Activated naive CD4-positive, alpha-beta T cell treated with anti-CD3 and anti-CD28 coated beads for 36 hours (primary cell): ENCODE measurements at regions of chr3 and their contacts with region 1.

Region 1: DNA sequence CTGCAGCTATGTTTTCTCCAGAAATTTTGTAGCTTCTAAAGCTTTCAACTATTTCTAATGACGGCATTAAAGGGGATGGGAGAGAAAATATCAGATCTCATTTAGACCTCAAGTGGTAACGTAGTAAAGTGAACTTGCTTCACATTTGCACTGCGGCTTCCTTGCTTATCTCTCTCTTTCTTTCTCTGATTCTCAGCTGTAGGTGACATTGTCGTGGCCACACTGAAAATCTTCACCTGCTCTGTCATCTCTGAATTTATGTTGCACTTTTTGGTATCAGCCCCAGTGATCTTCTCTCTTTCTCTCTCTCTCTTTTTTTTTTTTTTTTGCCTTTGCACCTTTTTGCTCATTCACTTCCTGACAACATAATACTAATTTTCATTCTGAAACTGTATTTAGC is 254.1 kb upstream of the SATB1 start:
- DNase-seq: peak; percentile 77
- H3K4me3 Mint-ChIP-seq: peak overlapping the region; percentile 31
- H3K27ac Mint-ChIP-seq: peak overlapping the region; percentile 81
- H3K4me1 Mint-ChIP-seq: peaks cover 81% of the 10 kb centered on the region
- H3K27me3 Mint-ChIP-seq: no peaks in the 10 kb centered on the region

Region 2: GRCh38 chr3:18334837-18335601 is 344.2 kb before region 1 on chr3:
- CTCF ChIA-PET with region 1: no interaction called
- intact Hi-C with region 1: loop called (anchors 1 kb)
- DNase-seq: no peak
- H3K4me3 Mint-ChIP-seq: no peak overlapping the region
- H3K27ac Mint-ChIP-seq: no peak overlapping the region
- H3K4me1 Mint-ChIP-seq: peaks cover 14% of the 10 kb centered on the region
- H3K27me3 Mint-ChIP-seq: no peaks in the 10 kb centered on the region

Region 3: DNA sequence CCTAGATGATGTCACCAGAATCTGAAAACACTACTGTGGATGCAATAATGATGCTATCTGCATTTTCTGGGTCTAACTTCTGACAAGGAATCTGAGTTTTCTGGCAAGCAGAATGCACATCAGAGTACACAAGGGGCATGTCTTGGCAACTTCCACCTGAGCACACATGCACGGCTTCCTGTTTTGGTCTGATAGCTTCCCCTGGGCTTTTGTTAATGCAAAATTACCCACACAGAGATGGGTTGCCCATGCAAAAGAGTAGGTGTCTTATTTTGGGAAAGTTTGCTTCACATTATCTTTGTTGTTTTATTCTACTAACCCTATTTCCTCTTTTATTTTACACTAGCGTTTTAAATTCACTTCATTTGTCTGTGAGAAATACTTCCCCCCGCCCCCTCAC is 179.9 kb before region 1 on chr3:
- CTCF ChIA-PET with region 1: no interaction called
- intact Hi-C with region 1: loop called (anchors 1 kb)
- DNase-seq: peak; percentile 42
- H3K4me3 Mint-ChIP-seq: peak overlapping the region; percentile 46
- H3K27ac Mint-ChIP-seq: peak overlapping the region; percentile 83
- H3K4me1 Mint-ChIP-seq: peaks cover 41% of the 10 kb centered on the region
- H3K27me3 Mint-ChIP-seq: no peaks in the 10 kb centered on the region

Region 4: GRCh38 chr3:18635215-18635614 is 44.0 kb before region 1 on chr3:
- CTCF ChIA-PET with region 1: no interaction called
- intact Hi-C with region 1: no loop called
- DNase-seq: no peak
- H3K4me3 Mint-ChIP-seq: no peak overlapping the region
- H3K27ac Mint-ChIP-seq: no peak overlapping the region
- H3K4me1 Mint-ChIP-seq: peaks cover 3% of the 10 kb centered on the region
- H3K27me3 Mint-ChIP-seq: no peaks in the 10 kb centered on the region

Region 5: DNA sequence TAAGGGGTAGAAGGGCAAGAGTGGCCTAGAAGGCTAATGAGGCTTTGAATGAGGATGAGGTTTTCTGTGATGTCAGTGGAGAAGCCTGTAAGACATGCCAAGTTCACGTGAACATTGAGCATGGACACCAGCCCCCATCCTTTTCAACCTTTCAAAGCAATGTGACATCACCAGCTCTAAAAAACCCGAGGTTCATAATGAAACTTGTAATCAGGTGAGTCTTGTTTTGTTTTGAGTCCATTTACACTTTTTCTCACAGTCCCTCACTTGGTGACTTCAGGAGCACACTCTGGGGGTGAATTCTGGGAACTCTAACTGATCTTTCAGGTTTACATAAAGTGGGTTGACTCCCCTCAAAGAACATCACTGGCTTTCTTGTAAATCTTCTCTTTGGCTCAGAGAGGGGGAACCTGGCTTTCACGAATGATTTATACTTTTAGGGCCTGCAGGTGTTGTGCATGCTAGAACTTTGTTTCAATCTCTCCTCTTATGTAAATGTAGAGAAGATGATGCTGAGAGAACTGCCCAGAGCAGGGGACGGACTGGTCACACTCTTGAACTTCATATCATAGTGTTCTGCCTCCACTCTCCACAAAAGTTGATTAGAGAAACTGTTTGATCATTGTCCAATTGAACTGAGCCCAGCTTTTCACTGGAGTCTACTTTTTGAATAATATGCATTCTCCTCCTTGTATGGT is 29.4 kb before region 1 on chr3:
- CTCF ChIA-PET with region 1: interaction called, 4 read pairs
- intact Hi-C with region 1: loop called (anchors 1 kb)
- DNase-seq: peak; percentile 87
- H3K4me3 Mint-ChIP-seq: no peak overlapping the region
- H3K27ac Mint-ChIP-seq: peak overlapping the region; percentile 92
- H3K4me1 Mint-ChIP-seq: peaks cover 74% of the 10 kb centered on the region
- H3K27me3 Mint-ChIP-seq: no peaks in the 10 kb centered on the region

Region 6: GRCh38 chr3:18717598-18717997 is 38.4 kb after region 1 on chr3:
- CTCF ChIA-PET with region 1: interaction called, 5 read pairs
- intact Hi-C with region 1: loop called (anchors 1 kb)
- DNase-seq: no peak
- H3K4me3 Mint-ChIP-seq: no peak overlapping the region
- H3K27ac Mint-ChIP-seq: peak overlapping the region; percentile 84
- H3K4me1 Mint-ChIP-seq: peaks cover 71% of the 10 kb centered on the region
- H3K27me3 Mint-ChIP-seq: no peaks in the 10 kb centered on the region

Region 7: GRCh38 chr3:19060404-19060803 is 381.2 kb after region 1 on chr3:
- CTCF ChIA-PET with region 1: no interaction called
- intact Hi-C with region 1: no loop called
- DNase-seq: no peak
- H3K4me3 Mint-ChIP-seq: no peak overlapping the region
- H3K27ac Mint-ChIP-seq: no peak overlapping the region
- H3K4me1 Mint-ChIP-seq: no peaks in the 10 kb centered on the region
- H3K27me3 Mint-ChIP-seq: no peaks in the 10 kb centered on the region